RWPE1 (cell line): ENCODE measurements at regions of chr17 and their contacts with region 1.

Region 1: DNA sequence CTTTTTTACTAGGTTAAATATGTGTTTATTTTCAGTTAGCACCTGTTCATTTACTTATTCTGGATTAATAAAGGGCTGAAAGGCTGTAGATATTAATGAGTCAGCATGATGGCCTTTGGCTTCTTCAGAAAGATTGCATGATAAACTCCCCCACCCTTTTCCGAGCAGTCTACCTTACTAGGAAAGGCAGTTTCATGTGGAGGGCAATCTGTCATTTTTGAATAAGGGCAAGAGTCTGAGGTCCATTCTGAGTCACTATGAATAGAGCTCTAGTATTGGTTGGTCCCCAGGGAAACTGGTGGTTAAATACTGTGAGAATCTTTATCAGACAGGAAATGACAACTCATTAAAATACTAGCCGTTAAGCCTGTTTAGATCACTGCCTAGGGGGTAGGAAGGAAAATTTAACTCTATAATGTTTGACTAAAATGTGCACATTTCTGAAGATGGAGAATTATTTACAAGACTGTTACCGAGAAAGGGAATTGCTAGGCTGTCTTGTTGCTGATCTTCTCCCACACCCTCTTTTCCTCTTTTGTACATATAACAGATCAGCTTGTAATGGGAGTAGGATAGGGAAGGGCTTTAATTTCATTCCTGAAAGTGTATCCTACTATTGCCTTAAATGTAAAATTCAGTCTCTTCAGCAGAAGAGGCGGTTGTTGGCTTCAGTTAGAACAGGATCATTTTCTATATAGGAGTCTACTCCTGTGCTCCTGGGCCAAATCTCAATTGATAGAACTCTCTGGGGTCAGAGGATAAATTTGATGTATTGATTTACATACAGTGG is 63.3 kb downstream of the TUBD1 start:
- DNase-seq: peak; percentile 85
- H3K27ac ChIP-seq: peak overlapping the region; percentile 91
- CTCF ChIP-seq: no peak

Region 2: GRCh38 chr17:59842901-59843652 is 13.7 kb after region 1 on chr17:
- CTCF ChIA-PET with region 1: no interaction called
- POLR2A ChIA-PET with region 1: interaction called, 10 read pairs
- DNase-seq: peak; percentile 44
- H3K27ac ChIP-seq: peak overlapping the region; percentile 97
- CTCF ChIP-seq: no peak